ENCODE measurements at regions of chr2 and their contacts with region 1.

Region 1: GRCh38 chr2:237923481-237924163 is 43.2 kb upstream of the UBE2F start:
- DNase-seq: peak; percentile 83
- ATAC-seq: peak; percentile 99
- H3K4me3 ChIP-seq: peak overlapping the region in 3 of 5 experiments; percentile 15 to 41 (median 30)
- H3K4me3 Mint-ChIP-seq: peak overlapping the region; percentile 65
- H3K27ac ChIP-seq: no peak overlapping the region
- H3K27ac Mint-ChIP-seq: peak overlapping the region; percentile 15
- H3K4me1 ChIP-seq: peaks cover 0 to 5% of the 10 kb centered on the region in 2 donors
- H3K4me1 Mint-ChIP-seq: peaks cover 18% of the 10 kb centered on the region
- H3K27me3 ChIP-seq: peaks cover 0 to 8% (median 0%) of the 10 kb centered on the region in 4 experiments
- H3K27me3 Mint-ChIP-seq: no peaks in the 10 kb centered on the region
- CTCF ChIP-seq: peak; percentile 99

Region 2: DNA sequence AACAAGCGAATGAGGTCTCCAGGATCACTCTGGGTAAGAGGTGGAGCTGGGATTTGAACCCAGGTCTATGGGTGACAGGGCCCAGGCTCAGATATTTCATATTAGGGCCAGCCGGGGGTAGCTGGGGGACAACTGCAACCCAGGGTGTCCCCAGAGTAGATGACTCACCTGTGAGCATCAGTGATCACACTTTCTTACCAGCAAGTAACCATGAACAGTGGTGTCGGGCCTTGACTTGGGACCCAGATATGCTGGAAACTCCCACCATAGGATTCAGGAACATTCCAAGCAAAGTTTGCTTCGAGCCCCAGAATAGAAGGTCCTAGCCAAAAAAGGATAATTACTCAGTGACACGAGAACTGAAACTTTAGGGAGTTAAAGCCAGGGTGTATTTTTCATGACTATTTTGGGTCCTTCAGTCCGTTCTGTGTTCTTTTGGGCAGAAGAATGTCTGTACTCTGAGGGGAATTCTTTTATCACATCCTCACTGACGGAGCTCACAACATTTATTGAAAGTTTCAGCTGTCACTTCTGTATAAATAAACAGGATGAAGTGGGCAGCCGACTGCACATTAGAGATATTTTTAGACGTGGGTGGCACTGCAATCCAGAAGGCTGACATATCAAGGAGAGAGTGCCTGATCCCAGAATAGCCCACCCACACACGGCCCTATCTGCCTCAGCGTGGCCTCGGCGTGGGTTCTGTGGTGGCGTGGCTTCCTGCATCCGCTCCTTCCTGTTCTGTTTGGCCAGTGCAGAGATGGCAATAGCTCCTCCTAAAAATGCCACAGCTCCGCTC is 18.6 kb before region 1 on chr2:
- CTCF ChIA-PET with region 1: interaction called, 17 read pairs
- POLR2A ChIA-PET with region 1: interaction called, 5 read pairs
- intact Hi-C with region 1: loop called (anchors 2 kb)
- DNase-seq: no peak
- ATAC-seq: peak; percentile 49
- H3K4me3 ChIP-seq: peak overlapping the region in 1 of 5 experiments; percentile 15
- H3K4me3 Mint-ChIP-seq: peak overlapping the region; percentile 82
- H3K27ac ChIP-seq: peak overlapping the region in 1 of 2 donors; percentile 19
- H3K27ac Mint-ChIP-seq: peak overlapping the region; percentile 95
- H3K4me1 ChIP-seq: peaks cover 8 to 10% of the 10 kb centered on the region in 2 donors
- H3K4me1 Mint-ChIP-seq: peaks cover 34% of the 10 kb centered on the region
- H3K27me3 ChIP-seq: no peaks in the 10 kb centered on the region
- H3K27me3 Mint-ChIP-seq: no peaks in the 10 kb centered on the region
- CTCF ChIP-seq: no peak

Measured in B cell (primary cell).